ENCODE measurements at regions of chr1 and their contacts with region 1.

Region 1: GRCh38 chr1:28956038-28956464 is 41.7 kb downstream of the EPB41 start:
- DNase-seq: no peak
- ATAC-seq: no peak
- H3K4me3 ChIP-seq: no peak overlapping the region
- H3K4me3 Mint-ChIP-seq: peak overlapping the region in 4 of 10 donors; percentile 4 to 65 (median 38)
- H3K27ac ChIP-seq: no peak overlapping the region
- H3K27ac Mint-ChIP-seq: peak overlapping the region in 5 of 9 donors; percentile 1 to 46 (median 14)
- H3K4me1 ChIP-seq: peaks cover 8 to 22% of the 10 kb centered on the region in 2 donors
- H3K4me1 Mint-ChIP-seq: peaks cover 24 to 91% (median 69%) of the 10 kb centered on the region in 7 donors
- H3K27me3 ChIP-seq: no peaks in the 10 kb centered on the region
- H3K27me3 Mint-ChIP-seq: no peaks in the 10 kb centered on the region

Region 2: DNA sequence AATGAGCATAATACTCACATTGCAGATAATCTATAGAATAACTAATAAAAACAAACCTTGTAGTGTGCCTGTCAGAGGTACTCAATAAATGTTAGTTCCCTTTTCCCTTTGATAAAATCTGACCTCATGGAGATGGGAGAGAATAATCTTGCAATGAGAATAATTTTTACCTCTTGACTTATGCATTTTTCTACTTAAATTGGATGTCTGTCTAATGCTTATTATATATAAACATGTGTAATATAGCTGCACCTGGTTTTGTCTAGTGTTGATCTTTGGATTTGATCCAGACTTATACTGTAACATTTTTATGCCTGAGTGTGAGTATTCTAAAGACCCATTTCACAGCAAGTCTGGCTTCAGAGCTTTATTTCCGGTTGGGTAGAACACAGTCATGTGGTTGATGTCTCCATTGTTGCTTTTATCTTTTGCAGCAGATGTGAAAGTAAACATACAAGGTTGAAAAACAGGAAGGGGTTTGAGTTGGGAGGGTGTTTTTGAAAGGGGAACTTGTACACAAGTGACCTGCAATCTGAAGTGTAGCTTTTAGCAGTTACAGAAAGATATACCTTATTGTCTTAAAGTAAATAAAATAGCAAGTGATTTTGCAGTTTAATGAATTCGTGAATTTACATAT is 29.3 kb before region 1 on chr1:
- CTCF ChIA-PET with region 1: no interaction called
- POLR2A ChIA-PET with region 1: interaction called, 3 read pairs
- intact Hi-C with region 1: loop called in 1 of 2 experiments (anchors 5 kb)
- DNase-seq: peak in 7 of 9 donors; percentile 61 to 85 (median 80)
- ATAC-seq: peak; percentile 93
- H3K4me3 ChIP-seq: peak overlapping the region; percentile 24
- H3K4me3 Mint-ChIP-seq: peak overlapping the region; percentile 54 to 91 (median 76)
- H3K27ac ChIP-seq: peak overlapping the region; percentile 69
- H3K27ac Mint-ChIP-seq: peak overlapping the region; percentile 65 to 98 (median 91)
- H3K4me1 ChIP-seq: peaks cover 53 to 54% of the 10 kb centered on the region in 2 donors
- H3K4me1 Mint-ChIP-seq: peaks cover 46 to 85% (median 55%) of the 10 kb centered on the region in 7 donors
- H3K27me3 ChIP-seq: no peaks in the 10 kb centered on the region
- H3K27me3 Mint-ChIP-seq: no peaks in the 10 kb centered on the region

Measured in naive thymus-derived CD4-positive, alpha-beta T cell (primary cell).